ENCODE measurements at regions of chr1 and their contacts with region 1.

Region 1: GRCh38 chr1:75265792-75266191 is 131.6 kb downstream of the LHX8 start:
- DNase-seq: peak; percentile 63
- H3K4me3 Mint-ChIP-seq: no peak overlapping the region
- H3K27ac Mint-ChIP-seq: no peak overlapping the region
- H3K4me1 Mint-ChIP-seq: no peaks in the 10 kb centered on the region
- H3K27me3 Mint-ChIP-seq: no peaks in the 10 kb centered on the region
- CTCF ChIP-seq: peak; percentile 66

Region 2: DNA sequence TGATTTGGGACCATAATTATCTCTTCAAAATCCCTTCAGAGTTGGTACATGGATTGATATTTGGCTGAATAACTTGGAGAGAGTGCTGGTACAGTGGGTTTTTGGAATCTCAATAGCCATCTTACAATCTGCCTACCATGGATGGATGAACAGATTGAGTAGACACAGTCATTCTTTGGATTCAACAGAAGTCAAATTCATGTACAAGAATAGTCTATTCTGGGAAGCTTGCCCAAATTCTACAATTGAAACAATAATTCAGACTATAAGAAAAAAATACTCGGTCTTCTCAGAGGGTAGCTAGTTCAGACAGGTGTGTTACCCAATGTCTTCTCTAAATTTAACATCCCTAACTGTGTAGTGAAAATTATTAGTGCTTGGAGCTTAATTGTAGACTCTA is 1641.8 kb before region 1 on chr1:
- CTCF ChIA-PET with region 1: no interaction called
- POLR2A ChIA-PET with region 1: no interaction called
- intact Hi-C with region 1: no loop called
- DNase-seq: no peak
- H3K4me3 Mint-ChIP-seq: no peak overlapping the region
- H3K27ac Mint-ChIP-seq: no peak overlapping the region
- H3K4me1 Mint-ChIP-seq: no peaks in the 10 kb centered on the region
- H3K27me3 Mint-ChIP-seq: no peaks in the 10 kb centered on the region
- CTCF ChIP-seq: no peak

Region 3: GRCh38 chr1:75233302-75233929 is 32.4 kb before region 1 on chr1:
- CTCF ChIA-PET with region 1: interaction called, 18 read pairs
- POLR2A ChIA-PET with region 1: no interaction called
- intact Hi-C with region 1: no loop called
- DNase-seq: peak; percentile 62
- H3K4me3 Mint-ChIP-seq: no peak overlapping the region
- H3K27ac Mint-ChIP-seq: no peak overlapping the region
- H3K4me1 Mint-ChIP-seq: no peaks in the 10 kb centered on the region
- H3K27me3 Mint-ChIP-seq: peaks cover 6% of the 10 kb centered on the region
- CTCF ChIP-seq: peak; percentile 47

Region 4: DNA sequence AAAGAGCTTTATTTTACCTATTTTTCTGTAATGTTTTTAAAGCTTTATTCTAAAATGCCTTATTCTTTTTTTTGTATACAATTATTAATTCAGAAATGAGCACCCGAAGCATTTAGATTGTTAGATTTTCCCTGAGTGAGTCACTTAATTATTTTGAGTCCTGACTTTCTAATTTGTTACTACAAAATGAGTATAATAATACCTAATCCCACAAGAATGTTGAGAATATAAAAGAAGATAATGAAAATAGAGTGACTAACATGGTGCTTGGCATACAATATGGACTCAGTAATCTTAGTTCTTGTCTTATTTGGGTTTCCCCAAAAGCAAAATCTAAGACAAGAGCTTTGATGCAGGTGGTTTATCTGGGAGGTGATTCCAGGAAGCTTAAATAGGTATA is 10.6 kb after region 1 on chr1:
- CTCF ChIA-PET with region 1: interaction called, 57 read pairs
- POLR2A ChIA-PET with region 1: interaction called, 4 read pairs
- intact Hi-C with region 1: no loop called
- DNase-seq: no peak
- H3K4me3 Mint-ChIP-seq: no peak overlapping the region
- H3K27ac Mint-ChIP-seq: no peak overlapping the region
- H3K4me1 Mint-ChIP-seq: no peaks in the 10 kb centered on the region
- H3K27me3 Mint-ChIP-seq: peaks cover 22% of the 10 kb centered on the region
- CTCF ChIP-seq: no peak

Region 5: DNA sequence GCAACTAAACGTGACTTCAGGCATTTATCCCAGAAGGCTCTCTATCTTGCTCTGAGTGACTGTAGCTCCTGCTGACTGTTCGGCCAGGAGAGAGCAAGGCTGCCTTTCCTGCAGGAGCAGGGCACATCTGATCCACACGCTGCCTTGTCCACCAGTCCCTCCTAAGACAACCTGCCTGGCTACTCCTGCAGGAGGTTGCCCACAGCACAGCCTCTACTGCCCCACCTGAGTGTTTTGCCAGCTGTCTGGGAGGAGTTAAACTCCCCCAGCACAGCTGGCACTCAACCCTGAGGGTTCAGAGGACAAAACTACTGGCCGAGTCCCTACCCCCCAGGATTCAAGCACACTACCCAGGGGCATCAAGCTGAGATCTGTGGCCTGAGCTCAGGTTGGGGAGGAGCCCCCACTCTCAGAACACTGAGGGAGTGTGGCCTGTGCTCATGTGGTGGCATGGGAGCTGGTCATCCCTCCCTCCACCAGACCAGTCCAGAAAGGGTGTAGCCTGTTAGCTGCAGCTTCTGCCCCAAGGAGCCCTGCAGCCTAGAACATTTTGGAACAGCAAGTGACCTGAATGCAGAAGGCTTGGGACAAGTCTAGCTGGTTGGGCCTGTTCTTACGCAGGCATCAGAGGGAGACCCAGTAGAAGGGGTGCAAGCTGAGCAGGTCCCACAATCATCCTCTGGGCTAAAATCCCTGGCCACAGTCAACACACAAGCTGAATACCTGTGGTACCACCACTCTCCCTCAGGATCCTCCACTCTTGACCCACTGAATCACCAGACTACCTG is 107.9 kb after region 1 on chr1:
- CTCF ChIA-PET with region 1: interaction called, 10 read pairs
- POLR2A ChIA-PET with region 1: interaction called, 11 read pairs
- intact Hi-C with region 1: loop called (anchors 5 kb)
- DNase-seq: no peak
- H3K4me3 Mint-ChIP-seq: peak overlapping the region; percentile 75
- H3K27ac Mint-ChIP-seq: no peak overlapping the region
- H3K4me1 Mint-ChIP-seq: peaks cover 16% of the 10 kb centered on the region
- H3K27me3 Mint-ChIP-seq: no peaks in the 10 kb centered on the region
- CTCF ChIP-seq: no peak

Region 6: GRCh38 chr1:75724472-75725022 is 458.8 kb after region 1 on chr1 and contains the start of gene ACADM:
- CTCF ChIA-PET with region 1: interaction called, 4 read pairs
- POLR2A ChIA-PET with region 1: no interaction called
- intact Hi-C with region 1: loop called (anchors 5 kb)
- DNase-seq: peak; percentile 91
- H3K4me3 Mint-ChIP-seq: peak within 1 kb of the TSS; percentile 99
- H3K27ac Mint-ChIP-seq: peak within 1 kb of the TSS; percentile 97
- H3K4me1 Mint-ChIP-seq: peaks cover 31% of the 10 kb centered on the region
- H3K27me3 Mint-ChIP-seq: no peaks in the 10 kb centered on the region
- CTCF ChIP-seq: no peak
- total RNA-seq, gene ACADM: 35.7 and 43.2 TPM in 2 replicates